Left ventricle myocardium inferior (tissue), 1 donor: ENCODE measurements at regions of chr4 and their contacts with region 1.

Region 1: GRCh38 chr4:140243278-140243753 is 89.3 kb upstream of the MAML3 start:
- DNase-seq: no peak
- H3K4me3 ChIP-seq: no peak overlapping the region
- H3K27ac ChIP-seq: peak overlapping the region; percentile 50
- H3K4me1 ChIP-seq: peaks cover 19% of the 10 kb centered on the region
- H3K27me3 ChIP-seq: no peaks in the 10 kb centered on the region
- CTCF ChIP-seq: no peak

Region 2: DNA sequence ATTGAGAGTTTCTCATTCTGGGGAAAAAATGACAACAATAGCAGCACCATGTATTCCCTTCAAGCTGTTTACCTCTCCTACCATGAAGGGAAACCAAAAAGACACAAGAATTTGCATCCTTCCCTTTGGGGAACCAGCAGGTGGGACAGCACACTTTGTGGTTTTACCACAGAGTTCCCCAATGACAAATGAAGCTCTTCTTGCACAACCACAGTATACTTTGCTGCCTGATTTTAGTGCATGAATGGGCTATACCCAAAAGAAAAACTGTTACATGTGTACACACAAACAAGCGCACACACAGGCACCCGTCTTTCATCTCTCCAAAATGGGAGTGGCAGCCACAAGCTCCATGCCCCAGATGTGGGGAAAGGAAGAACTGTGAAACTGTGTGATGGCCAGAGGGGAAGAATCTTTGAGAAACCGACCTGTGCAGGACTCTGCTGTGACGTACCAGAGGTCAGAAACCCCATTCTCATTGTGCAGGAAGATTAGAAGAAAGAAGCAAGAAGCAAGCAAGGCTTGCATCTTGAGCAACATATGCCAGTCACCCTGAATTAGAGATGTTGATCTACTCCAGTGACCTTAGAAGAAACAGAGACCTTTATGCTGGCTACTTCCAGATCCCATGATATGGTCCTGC is 86.7 kb before region 1 on chr4:
- intact Hi-C with region 1: loop called (anchors 5 kb)
- DNase-seq: no peak
- H3K4me3 ChIP-seq: no peak overlapping the region
- H3K27ac ChIP-seq: no peak overlapping the region
- H3K4me1 ChIP-seq: peaks cover 27% of the 10 kb centered on the region
- H3K27me3 ChIP-seq: no peaks in the 10 kb centered on the region
- CTCF ChIP-seq: no peak

Region 3: GRCh38 chr4:140373328-140374129 is 130.2 kb after region 1 on chr4 and contains the start of gene SCOC:
- intact Hi-C with region 1: no loop called
- DNase-seq: peak; percentile 99
- H3K4me3 ChIP-seq: peak within 1 kb of the TSS; percentile 95
- H3K27ac ChIP-seq: peak within 1 kb of the TSS; percentile 96
- H3K4me1 ChIP-seq: peaks cover 59% of the 10 kb centered on the region
- H3K27me3 ChIP-seq: no peaks in the 10 kb centered on the region
- CTCF ChIP-seq: no peak
- total RNA-seq, gene SCOC: 84.5 TPM